ENCODE measurements at regions of chr6 and their contacts with region 1.

Region 1: GRCh38 chr6:40587240-40588069 is at the start of gene LRFN2:
- DNase-seq: peak; percentile 92
- H3K4me3 ChIP-seq: peak within 1 kb of the TSS; percentile 48 to 61
- H3K27ac ChIP-seq: peak within 1 kb of the TSS in 1 of 2 experiments; percentile 82; a peak in 2 of 4 replicates
- H3K4me1 ChIP-seq: peaks cover 0 to 38% of the 10 kb centered on the region in 2 experiments; a peak in 1 of 4 replicates
- H3K27me3 ChIP-seq: peaks cover 20% of the 10 kb centered on the region; the same call in 1 of the 2 replicates
- CTCF ChIP-seq: peak; percentile 58
- EP300 ChIP-seq: no peak
- RAD21 ChIP-seq: peak; percentile 62
- polyA plus RNA-seq, gene LRFN2: 0.02 and 0.13 TPM in 2 replicates

Region 2: DNA sequence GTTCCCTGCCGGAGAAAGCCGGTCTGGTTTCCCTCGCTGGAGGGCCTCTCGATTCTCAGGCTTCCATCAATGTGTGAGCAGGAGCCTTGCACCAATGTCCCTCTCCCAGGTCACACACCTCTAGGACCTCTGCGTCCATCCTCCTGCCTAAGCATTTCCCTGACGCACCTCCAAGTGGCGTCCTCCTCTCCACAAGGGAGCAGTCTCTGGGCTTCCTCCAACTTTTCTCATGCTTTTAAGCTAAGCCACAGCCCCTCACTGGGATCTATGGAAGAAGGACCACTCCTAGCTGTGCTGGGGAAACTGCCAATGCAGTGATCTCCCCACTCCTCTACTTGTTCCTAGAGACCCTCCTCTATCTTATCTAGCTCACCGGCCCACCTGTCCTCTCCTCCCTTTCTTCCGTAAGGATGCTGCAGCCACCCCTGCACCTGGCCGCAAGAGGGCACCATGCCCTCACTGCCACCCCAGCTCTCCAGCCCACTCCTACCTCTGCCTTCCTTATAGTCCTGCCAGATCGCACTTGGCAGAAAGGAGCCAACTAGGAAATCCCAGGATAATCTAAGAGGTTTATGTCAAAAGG is 259.0 kb before region 1 on chr6:
- CTCF ChIA-PET with region 1: interaction called, 65 read pairs
- POLR2A ChIA-PET with region 1: no interaction called
- DNase-seq: peak; percentile 63
- H3K4me3 ChIP-seq: no peak overlapping the region; a peak in 1 of 4 replicates
- H3K27ac ChIP-seq: no peak overlapping the region
- H3K4me1 ChIP-seq: peaks cover 0 to 7% of the 10 kb centered on the region in 2 experiments; a peak in 1 of 4 replicates
- H3K27me3 ChIP-seq: no peaks in the 10 kb centered on the region
- CTCF ChIP-seq: peak; percentile 39; the same call in 1 of the 2 replicates
- EP300 ChIP-seq: no peak
- RAD21 ChIP-seq: peak; percentile 72

Region 3: GRCh38 chr6:40395066-40395704 is 192.3 kb before region 1 on chr6:
- CTCF ChIA-PET with region 1: no interaction called
- POLR2A ChIA-PET with region 1: no interaction called
- DNase-seq: no peak
- H3K4me3 ChIP-seq: no peak overlapping the region
- H3K27ac ChIP-seq: no peak overlapping the region
- H3K4me1 ChIP-seq: peaks cover 0 to 36% of the 10 kb centered on the region in 2 experiments; a peak in 1 of 4 replicates
- H3K27me3 ChIP-seq: no peaks in the 10 kb centered on the region
- CTCF ChIP-seq: no peak
- EP300 ChIP-seq: no peak
- RAD21 ChIP-seq: no peak

Region 4: GRCh38 chr6:40436685-40437604 is 150.5 kb before region 1 on chr6:
- CTCF ChIA-PET with region 1: interaction called, 20 read pairs
- POLR2A ChIA-PET with region 1: interaction called, 3 read pairs
- DNase-seq: peak; percentile 66
- H3K4me3 ChIP-seq: no peak overlapping the region
- H3K27ac ChIP-seq: peak overlapping the region in 1 of 2 experiments; percentile 94; a peak in 2 of 4 replicates
- H3K4me1 ChIP-seq: peaks cover 15 to 55% of the 10 kb centered on the region in 2 experiments; a peak in 3 of 4 replicates
- H3K27me3 ChIP-seq: no peaks in the 10 kb centered on the region
- CTCF ChIP-seq: no peak
- EP300 ChIP-seq: peak in 1 of 2 experiments; percentile 85; a peak in 2 of 4 replicates
- RAD21 ChIP-seq: peak; percentile 24

Region 5: DNA sequence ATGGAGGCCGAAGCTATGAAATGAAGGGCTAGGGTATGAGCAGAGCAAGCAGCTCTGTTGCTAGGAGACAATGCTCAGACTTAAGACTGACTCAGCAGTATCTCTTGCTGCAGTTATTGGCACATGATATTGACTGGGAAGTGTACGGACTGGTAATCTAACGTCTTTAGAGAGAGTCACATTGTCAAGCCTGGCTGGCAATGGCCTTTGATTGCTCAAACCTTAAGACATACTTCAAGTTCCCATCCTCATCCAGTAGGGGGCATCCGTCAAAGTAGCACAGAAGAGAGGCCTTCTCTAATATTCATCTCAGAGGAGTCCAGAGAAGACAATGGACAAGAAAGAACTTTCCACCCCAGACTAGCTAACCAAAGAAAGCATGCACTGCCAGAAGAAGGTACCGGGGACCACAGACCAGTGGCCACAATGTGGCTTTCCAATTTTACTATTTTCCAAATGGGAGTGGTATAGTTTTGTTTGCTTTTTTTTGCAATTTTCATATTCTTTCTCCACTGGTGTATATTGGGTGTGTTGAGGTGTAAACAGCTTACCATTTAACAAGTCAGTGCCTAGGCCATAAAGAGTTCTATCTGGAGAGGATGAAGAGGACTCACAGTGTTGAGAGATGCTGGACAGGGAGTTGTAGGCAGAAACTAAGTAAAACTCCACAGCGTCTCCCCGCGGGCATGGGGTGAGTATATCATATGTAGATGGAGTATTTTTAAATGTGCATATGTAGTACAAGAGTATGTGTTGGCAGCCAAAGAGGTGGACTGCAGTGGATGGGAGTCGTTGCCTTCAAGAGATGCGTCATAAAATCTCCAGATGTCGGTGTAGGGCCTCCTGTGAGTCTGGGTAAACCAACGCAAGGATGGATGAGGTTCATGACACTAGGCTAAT is 37.0 kb before region 1 on chr6:
- CTCF ChIA-PET with region 1: interaction called, 11 read pairs
- POLR2A ChIA-PET with region 1: no interaction called
- DNase-seq: peak; percentile 35
- H3K4me3 ChIP-seq: no peak overlapping the region
- H3K27ac ChIP-seq: no peak overlapping the region
- H3K4me1 ChIP-seq: peaks cover 0 to 2% of the 10 kb centered on the region in 2 experiments; a peak in 1 of 4 replicates
- H3K27me3 ChIP-seq: no peaks in the 10 kb centered on the region
- CTCF ChIP-seq: peak; percentile 65
- EP300 ChIP-seq: no peak
- RAD21 ChIP-seq: peak; percentile 61

Region 6: GRCh38 chr6:40631744-40632143 is 44.3 kb after region 1 on chr6:
- CTCF ChIA-PET with region 1: interaction called, 16 read pairs
- POLR2A ChIA-PET with region 1: no interaction called
- DNase-seq: peak; percentile 70
- H3K4me3 ChIP-seq: no peak overlapping the region
- H3K27ac ChIP-seq: peak overlapping the region in 1 of 2 experiments; percentile 97; a peak in 2 of 4 replicates
- H3K4me1 ChIP-seq: peaks cover 0 to 67% of the 10 kb centered on the region in 2 experiments; a peak in 2 of 4 replicates
- H3K27me3 ChIP-seq: no peaks in the 10 kb centered on the region
- CTCF ChIP-seq: no peak
- EP300 ChIP-seq: peak in 1 of 2 experiments; percentile 80; a peak in 2 of 4 replicates
- RAD21 ChIP-seq: peak; percentile 45

Region 7: GRCh38 chr6:40912158-40912946 is 324.9 kb after region 1 on chr6:
- CTCF ChIA-PET with region 1: interaction called, 23 read pairs
- POLR2A ChIA-PET with region 1: no interaction called
- DNase-seq: peak; percentile 81
- H3K4me3 ChIP-seq: no peak overlapping the region; a peak in 1 of 4 replicates
- H3K27ac ChIP-seq: no peak overlapping the region; a peak in 1 of 4 replicates
- H3K4me1 ChIP-seq: peaks cover 4 to 9% of the 10 kb centered on the region in 2 experiments; a peak in 2 of 4 replicates
- H3K27me3 ChIP-seq: no peaks in the 10 kb centered on the region
- CTCF ChIP-seq: peak; percentile 48
- EP300 ChIP-seq: no peak
- RAD21 ChIP-seq: peak; percentile 93

Measured in SK-N-SH (cell line).